Right ventricle myocardium inferior (tissue), 1 donor: ENCODE measurements at regions of chr12 and their contacts with region 1.

Region 1: DNA sequence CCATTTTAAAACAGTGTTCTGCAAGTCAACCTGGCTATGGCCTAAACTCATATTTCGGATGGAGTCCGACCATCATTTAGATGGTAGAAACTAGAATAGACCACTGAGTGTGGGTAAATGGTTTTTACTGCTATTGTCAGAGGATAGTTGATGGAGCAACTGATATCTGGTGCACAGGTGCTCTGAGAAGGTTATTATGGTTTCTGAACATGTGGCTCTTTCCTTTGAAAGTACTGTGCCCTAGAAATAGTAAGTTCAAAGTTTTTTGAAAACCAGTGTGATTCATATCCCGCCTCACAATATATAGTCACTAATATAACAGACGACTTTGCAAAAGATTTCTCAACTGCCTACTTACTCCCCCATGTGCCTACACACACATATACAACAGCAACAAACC is 64.4 kb upstream of the BTG1 start:
- DNase-seq: no peak
- ATAC-seq: no peak

Region 2: DNA sequence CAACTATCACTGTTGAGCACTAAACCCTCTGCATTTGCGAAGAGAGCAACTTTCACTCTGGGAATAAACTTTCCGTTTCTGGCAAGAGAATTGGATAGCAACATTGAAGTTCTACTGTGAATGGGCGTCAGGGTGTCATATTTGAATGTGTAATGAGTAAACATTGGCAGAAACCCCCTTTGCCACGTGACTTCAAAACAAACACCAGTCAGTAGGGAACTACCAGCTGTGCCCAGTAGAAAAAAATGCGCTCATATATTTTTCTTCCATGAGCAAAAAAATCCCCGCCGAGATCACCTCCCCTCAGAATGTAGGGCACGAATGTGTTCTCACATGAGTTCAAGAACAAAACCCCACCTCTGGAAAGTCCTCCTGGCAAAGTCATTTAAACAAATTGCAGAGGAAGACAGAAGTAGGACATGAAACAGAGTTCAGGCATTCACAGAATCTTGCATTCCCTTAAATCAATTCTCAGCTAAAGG is 145.0 kb before region 1 on chr12:
- intact Hi-C with region 1: no loop called
- DNase-seq: no peak
- ATAC-seq: no peak

Region 3: GRCh38 chr12:92178340-92178739 is 31.7 kb before region 1 on chr12:
- intact Hi-C with region 1: loop called (anchors 5 kb)
- DNase-seq: no peak
- ATAC-seq: no peak

Region 4: DNA sequence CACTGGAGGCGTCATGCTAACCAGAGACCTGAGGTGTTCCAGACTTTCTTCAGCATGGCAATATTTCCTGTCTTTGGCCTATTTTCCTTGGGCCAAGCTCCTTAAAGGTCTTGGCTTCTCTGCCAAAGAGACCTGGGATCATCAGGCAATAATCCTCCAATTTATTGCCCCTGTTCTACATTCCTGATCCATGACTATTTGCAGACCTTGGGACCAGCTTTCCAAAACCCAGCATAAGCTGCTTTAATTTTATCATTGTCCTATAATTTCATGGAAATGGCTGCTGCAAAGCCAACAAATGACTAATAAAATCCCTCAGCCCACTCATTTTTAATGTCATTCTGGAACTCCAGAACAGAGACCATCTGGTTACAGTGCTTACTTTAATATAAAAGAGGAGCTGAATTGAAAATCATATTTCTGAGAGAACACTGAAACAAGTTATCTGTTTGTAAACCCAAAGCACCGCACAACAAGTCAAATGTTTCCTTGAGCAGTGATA is 102.4 kb after region 1 on chr12:
- intact Hi-C with region 1: no loop called
- DNase-seq: no peak
- ATAC-seq: peak; percentile 42